ENCODE measurements at regions of chr11 and their contacts with region 1.

Region 1: GRCh38 chr11:35822815-35823495 is 120.9 kb upstream of the LDLRAD3 start:
- DNase-seq: no peak
- ATAC-seq: no peak
- H3K4me3 Mint-ChIP-seq: no peak overlapping the region
- H3K27ac Mint-ChIP-seq: no peak overlapping the region
- H3K4me1 Mint-ChIP-seq: peaks cover 9% of the 10 kb centered on the region
- H3K27me3 Mint-ChIP-seq: no peaks in the 10 kb centered on the region

Region 2: GRCh38 chr11:35785287-35786167 is 37.4 kb before region 1 on chr11:
- CTCF ChIA-PET with region 1: interaction called, 14 read pairs
- POLR2A ChIA-PET with region 1: no interaction called
- DNase-seq: no peak
- ATAC-seq: peak; percentile 74
- H3K4me3 Mint-ChIP-seq: no peak overlapping the region
- H3K27ac Mint-ChIP-seq: peak overlapping the region; percentile 17
- H3K4me1 Mint-ChIP-seq: peaks cover 34% of the 10 kb centered on the region
- H3K27me3 Mint-ChIP-seq: no peaks in the 10 kb centered on the region

Region 3: GRCh38 chr11:35800970-35801953 is 21.7 kb before region 1 on chr11:
- CTCF ChIA-PET with region 1: interaction called, 28 read pairs
- POLR2A ChIA-PET with region 1: interaction called, 3 read pairs
- DNase-seq: no peak
- ATAC-seq: no peak
- H3K4me3 Mint-ChIP-seq: no peak overlapping the region
- H3K27ac Mint-ChIP-seq: no peak overlapping the region
- H3K4me1 Mint-ChIP-seq: peaks cover 8% of the 10 kb centered on the region
- H3K27me3 Mint-ChIP-seq: no peaks in the 10 kb centered on the region

Region 4: DNA sequence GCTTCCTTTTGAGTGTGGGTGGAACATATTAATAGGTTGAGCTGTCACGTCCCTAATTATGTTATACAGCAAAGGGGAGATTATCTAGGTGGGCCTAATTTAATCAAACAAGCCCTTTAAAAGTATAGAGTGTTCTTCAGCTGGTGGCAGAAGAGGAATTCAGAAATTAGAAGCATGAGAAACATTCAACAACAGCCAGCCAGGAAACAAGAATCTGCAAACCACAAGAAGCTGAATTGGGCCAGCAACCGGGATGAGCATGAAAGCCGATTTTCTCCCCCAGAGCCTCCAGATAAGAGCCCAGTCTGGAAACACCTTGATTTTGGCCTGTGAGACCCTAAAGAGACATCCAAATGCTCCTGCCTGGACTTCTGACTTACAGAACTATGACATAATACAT is 15.1 kb after region 1 on chr11:
- CTCF ChIA-PET with region 1: interaction called, 21 read pairs
- POLR2A ChIA-PET with region 1: no interaction called
- DNase-seq: no peak
- ATAC-seq: no peak
- H3K4me3 Mint-ChIP-seq: no peak overlapping the region
- H3K27ac Mint-ChIP-seq: no peak overlapping the region
- H3K4me1 Mint-ChIP-seq: no peaks in the 10 kb centered on the region
- H3K27me3 Mint-ChIP-seq: peaks cover 5% of the 10 kb centered on the region

Region 5: DNA sequence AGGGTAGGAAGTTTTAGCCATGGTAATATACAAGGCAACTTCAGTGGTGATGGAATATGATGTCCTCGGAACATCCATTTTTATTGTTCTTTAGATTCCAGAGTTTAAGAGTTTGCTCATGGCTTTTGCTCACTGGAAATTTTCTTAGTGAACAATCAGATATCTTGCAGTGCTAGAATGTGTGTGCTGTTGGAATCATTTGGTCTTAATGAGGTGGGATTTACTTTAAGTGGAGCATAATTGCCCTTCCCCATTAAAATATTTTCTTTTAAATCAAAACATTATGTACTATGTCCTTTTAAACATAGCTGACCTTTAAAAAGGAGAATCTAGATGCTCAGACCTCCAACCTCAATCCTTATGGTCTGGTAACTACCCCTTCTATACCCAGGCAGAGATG is 43.6 kb after region 1 on chr11:
- CTCF ChIA-PET with region 1: no interaction called
- POLR2A ChIA-PET with region 1: no interaction called
- DNase-seq: no peak
- ATAC-seq: no peak
- H3K4me3 Mint-ChIP-seq: no peak overlapping the region
- H3K27ac Mint-ChIP-seq: no peak overlapping the region
- H3K4me1 Mint-ChIP-seq: no peaks in the 10 kb centered on the region
- H3K27me3 Mint-ChIP-seq: peaks cover 3% of the 10 kb centered on the region

Region 6: DNA sequence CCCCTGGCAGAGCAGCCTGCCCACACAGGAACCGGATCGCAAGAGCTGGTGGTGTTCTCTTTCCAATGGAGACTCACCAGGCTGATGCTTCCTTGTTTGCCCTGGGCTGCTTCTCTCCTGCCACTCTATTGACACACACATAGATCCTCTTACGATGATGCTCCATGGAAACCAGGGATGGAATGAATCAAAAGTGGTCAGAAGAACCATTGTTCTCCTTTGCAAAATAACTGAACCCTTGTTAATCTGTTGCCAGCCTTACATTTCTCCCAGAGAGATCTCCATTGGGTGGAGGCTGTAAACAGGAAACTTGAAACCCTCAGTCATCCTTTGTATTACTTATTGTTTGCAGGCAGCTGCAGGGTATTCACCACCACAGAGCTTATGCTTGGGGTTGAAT is 96.3 kb after region 1 on chr11:
- CTCF ChIA-PET with region 1: no interaction called
- POLR2A ChIA-PET with region 1: no interaction called
- DNase-seq: no peak
- ATAC-seq: no peak
- H3K4me3 Mint-ChIP-seq: no peak overlapping the region
- H3K27ac Mint-ChIP-seq: no peak overlapping the region
- H3K4me1 Mint-ChIP-seq: no peaks in the 10 kb centered on the region
- H3K27me3 Mint-ChIP-seq: no peaks in the 10 kb centered on the region

Region 7: GRCh38 chr11:36131721-36132397 is 308.9 kb after region 1 on chr11:
- CTCF ChIA-PET with region 1: interaction called, 10 read pairs
- POLR2A ChIA-PET with region 1: no interaction called
- DNase-seq: peak; percentile 25
- ATAC-seq: no peak
- H3K4me3 Mint-ChIP-seq: no peak overlapping the region
- H3K27ac Mint-ChIP-seq: no peak overlapping the region
- H3K4me1 Mint-ChIP-seq: no peaks in the 10 kb centered on the region
- H3K27me3 Mint-ChIP-seq: peaks cover 6% of the 10 kb centered on the region